ENCODE measurements at regions of chr15 and their contacts with region 1.

Region 1: DNA sequence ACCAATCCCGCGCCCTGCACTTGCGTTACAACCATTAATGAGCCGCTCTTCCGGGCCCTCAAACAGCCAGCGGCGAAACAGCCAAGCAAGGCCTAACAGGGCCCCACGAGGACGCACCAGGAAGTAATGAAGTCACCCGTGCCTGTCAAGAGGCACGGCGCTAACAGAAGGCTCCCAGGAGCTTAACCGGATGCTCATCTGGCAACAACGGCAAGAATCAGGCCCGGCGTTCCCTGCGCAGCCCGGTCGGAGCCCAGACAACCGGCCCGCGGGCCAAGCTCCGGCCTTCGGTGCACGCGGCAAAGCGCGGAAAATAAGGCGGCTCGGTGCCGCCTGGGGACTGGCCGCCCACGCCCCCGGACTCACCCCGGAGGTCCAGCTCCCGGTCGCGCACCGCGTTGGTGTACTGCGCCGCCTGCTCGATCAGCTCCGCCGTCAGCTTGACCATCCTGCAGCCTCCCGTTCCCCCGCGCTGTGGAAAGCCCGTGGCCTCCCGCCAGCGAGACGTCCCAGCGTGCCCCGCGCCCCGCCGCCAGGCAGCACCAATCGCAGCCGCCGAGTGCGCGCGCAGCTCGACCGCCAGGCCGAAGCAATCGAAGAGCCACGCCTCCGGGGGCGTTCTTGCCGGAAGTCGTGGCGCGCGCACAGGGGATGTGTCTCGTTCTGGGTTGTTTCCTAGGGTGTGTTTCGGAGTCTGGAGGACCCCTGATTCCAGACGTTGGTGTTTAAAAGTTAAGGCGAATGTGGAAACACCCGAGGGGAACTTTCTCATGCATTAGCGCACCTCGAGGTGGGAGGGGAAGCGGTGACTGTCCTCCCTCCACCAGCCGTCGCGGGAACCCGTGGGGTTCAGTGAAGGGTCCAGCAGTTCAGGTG is at the start of gene SNRPA1:
- DNase-seq: peak; percentile 92 to 99 (median 96)
- ATAC-seq: peak; percentile 94
- H3K4me3 ChIP-seq: peak within 1 kb of the TSS; percentile 76
- H3K4me3 Mint-ChIP-seq: peak within 1 kb of the TSS; percentile 90 to 99 (median 97)
- H3K27ac ChIP-seq: peak within 1 kb of the TSS; percentile 95
- H3K27ac Mint-ChIP-seq: peak within 1 kb of the TSS; percentile 89 to 99 (median 96)
- H3K4me1 ChIP-seq: peaks cover 14 to 27% of the 10 kb centered on the region in 2 donors
- H3K4me1 Mint-ChIP-seq: peaks cover 27 to 58% (median 47%) of the 10 kb centered on the region in 7 donors
- H3K27me3 ChIP-seq: no peaks in the 10 kb centered on the region
- H3K27me3 Mint-ChIP-seq: no peaks in the 10 kb centered on the region
- total RNA-seq, gene SNRPA1: 80.1 to 212 (median 110) TPM

Region 2: GRCh38 chr15:100596792-100597191 is 698.2 kb before region 1 on chr15:
- CTCF ChIA-PET with region 1: no interaction called
- POLR2A ChIA-PET with region 1: interaction called, 3 read pairs
- intact Hi-C with region 1: loop called in 1 of 2 experiments (anchors 2 kb)
- DNase-seq: peak; percentile 52 to 97 (median 94)
- ATAC-seq: peak; percentile 93
- H3K4me3 ChIP-seq: peak overlapping the region; percentile 49
- H3K4me3 Mint-ChIP-seq: peak overlapping the region in 7 of 10 donors; percentile 69 to 87 (median 86)
- H3K27ac ChIP-seq: peak overlapping the region; percentile 91
- H3K27ac Mint-ChIP-seq: peak overlapping the region in 4 of 9 donors; percentile 96 to 98 (median 96)
- H3K4me1 ChIP-seq: peaks cover 52 to 82% of the 10 kb centered on the region in 2 donors
- H3K4me1 Mint-ChIP-seq: peaks cover 0 to 78% (median 51%) of the 10 kb centered on the region in 7 donors
- H3K27me3 ChIP-seq: no peaks in the 10 kb centered on the region
- H3K27me3 Mint-ChIP-seq: peaks cover 0 to 2% (median 0%) of the 10 kb centered on the region in 5 donors

Region 3: DNA sequence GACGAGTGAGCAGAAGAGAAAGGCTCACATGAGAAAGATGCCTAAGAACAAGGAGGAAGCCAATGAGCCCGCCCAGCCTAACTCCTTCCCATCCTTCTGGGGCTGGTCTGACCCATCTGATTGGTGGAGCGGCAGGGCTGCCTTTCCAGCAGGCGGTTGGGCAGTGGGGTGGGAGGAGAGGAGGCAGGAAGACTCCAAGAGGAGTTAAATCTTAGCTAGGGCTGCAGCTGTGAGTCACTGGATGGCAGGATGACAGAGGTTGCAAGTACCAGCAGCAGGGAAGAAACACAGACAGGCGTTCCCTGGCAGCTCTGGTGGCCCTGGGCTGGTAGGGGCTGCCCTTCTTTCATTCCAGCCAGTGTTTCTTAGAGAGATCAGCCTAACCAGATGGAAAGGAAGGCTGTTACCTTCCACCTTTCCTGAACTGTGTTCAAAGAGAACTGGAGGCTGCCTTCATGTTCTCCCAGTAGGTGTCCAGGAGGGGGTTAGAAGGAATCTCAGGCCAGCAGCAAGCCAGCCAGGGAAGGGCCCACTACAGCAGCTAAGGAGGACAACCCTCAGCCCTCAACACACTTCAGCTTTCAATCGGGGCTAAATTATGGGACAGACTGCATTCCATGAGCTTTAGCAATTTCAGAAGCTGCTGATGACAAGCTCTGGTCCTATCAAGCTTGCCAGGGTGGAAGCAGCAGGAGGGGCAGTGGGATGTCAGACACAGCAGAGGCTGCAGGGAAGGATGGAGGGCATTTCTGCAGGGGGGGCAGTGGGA is 93.4 kb before region 1 on chr15:
- CTCF ChIA-PET with region 1: no interaction called
- POLR2A ChIA-PET with region 1: no interaction called
- intact Hi-C with region 1: no loop called
- DNase-seq: peak in 1 of 9 donors; percentile 45
- ATAC-seq: peak; percentile 68
- H3K4me3 ChIP-seq: no peak overlapping the region
- H3K4me3 Mint-ChIP-seq: peak overlapping the region in 3 of 10 donors; percentile 34 to 73 (median 36)
- H3K27ac ChIP-seq: no peak overlapping the region
- H3K27ac Mint-ChIP-seq: peak overlapping the region in 4 of 9 donors; percentile 65 to 81 (median 69)
- H3K4me1 ChIP-seq: peaks cover 16 to 18% of the 10 kb centered on the region in 2 donors
- H3K4me1 Mint-ChIP-seq: peaks cover 46 to 87% (median 80%) of the 10 kb centered on the region in 7 donors
- H3K27me3 ChIP-seq: no peaks in the 10 kb centered on the region
- H3K27me3 Mint-ChIP-seq: no peaks in the 10 kb centered on the region

Region 4: GRCh38 chr15:101232677-101233076 is 62.3 kb before region 1 on chr15:
- CTCF ChIA-PET with region 1: no interaction called
- POLR2A ChIA-PET with region 1: no interaction called
- intact Hi-C with region 1: no loop called
- DNase-seq: no peak
- ATAC-seq: no peak
- H3K4me3 ChIP-seq: no peak overlapping the region
- H3K4me3 Mint-ChIP-seq: no peak overlapping the region
- H3K27ac ChIP-seq: no peak overlapping the region
- H3K27ac Mint-ChIP-seq: no peak overlapping the region
- H3K4me1 ChIP-seq: no peaks in the 10 kb centered on the region
- H3K4me1 Mint-ChIP-seq: peaks cover 13 to 69% (median 40%) of the 10 kb centered on the region in 7 donors
- H3K27me3 ChIP-seq: no peaks in the 10 kb centered on the region
- H3K27me3 Mint-ChIP-seq: no peaks in the 10 kb centered on the region

Region 5: GRCh38 chr15:101251830-101252820 is 42.8 kb before region 1 on chr15 and contains the start of gene CHSY1:
- CTCF ChIA-PET with region 1: interaction called, 4 read pairs
- POLR2A ChIA-PET with region 1: interaction called, 9 read pairs
- intact Hi-C with region 1: loop called in 1 of 2 experiments (anchors 1 kb)
- DNase-seq: peak; percentile 71 to 91 (median 81)
- ATAC-seq: peak; percentile 91
- H3K4me3 ChIP-seq: peak within 1 kb of the TSS; percentile 64
- H3K4me3 Mint-ChIP-seq: peak within 1 kb of the TSS; percentile 84 to 97 (median 94)
- H3K27ac ChIP-seq: peak within 1 kb of the TSS; percentile 62
- H3K27ac Mint-ChIP-seq: peak within 1 kb of the TSS; percentile 77 to 96 (median 84)
- H3K4me1 ChIP-seq: peaks cover 17 to 21% of the 10 kb centered on the region in 2 donors
- H3K4me1 Mint-ChIP-seq: peaks cover 17 to 63% (median 37%) of the 10 kb centered on the region in 7 donors
- H3K27me3 ChIP-seq: no peaks in the 10 kb centered on the region
- H3K27me3 Mint-ChIP-seq: no peaks in the 10 kb centered on the region
- total RNA-seq, gene CHSY1: 8.9 to 47.0 (median 10.8) TPM

Region 6: GRCh38 chr15:101320501-101321052 is 25.6 kb after region 1 on chr15:
- CTCF ChIA-PET with region 1: interaction called, 3 read pairs
- POLR2A ChIA-PET with region 1: interaction called, 24 read pairs
- intact Hi-C with region 1: loop called (anchors 1 kb)
- DNase-seq: peak; percentile 32 to 75 (median 61)
- ATAC-seq: peak; percentile 96
- H3K4me3 ChIP-seq: peak overlapping the region; percentile 68
- H3K4me3 Mint-ChIP-seq: peak overlapping the region; percentile 68 to 91 (median 86)
- H3K27ac ChIP-seq: peak overlapping the region; percentile 55
- H3K27ac Mint-ChIP-seq: peak overlapping the region; percentile 88 to 97 (median 94)
- H3K4me1 ChIP-seq: peaks cover 5 to 8% of the 10 kb centered on the region in 2 donors
- H3K4me1 Mint-ChIP-seq: peaks cover 13 to 14% (median 14%) of the 10 kb centered on the region in 7 donors
- H3K27me3 ChIP-seq: no peaks in the 10 kb centered on the region
- H3K27me3 Mint-ChIP-seq: peaks cover 2 to 20% (median 9%) of the 10 kb centered on the region in 5 donors

Region 7: DNA sequence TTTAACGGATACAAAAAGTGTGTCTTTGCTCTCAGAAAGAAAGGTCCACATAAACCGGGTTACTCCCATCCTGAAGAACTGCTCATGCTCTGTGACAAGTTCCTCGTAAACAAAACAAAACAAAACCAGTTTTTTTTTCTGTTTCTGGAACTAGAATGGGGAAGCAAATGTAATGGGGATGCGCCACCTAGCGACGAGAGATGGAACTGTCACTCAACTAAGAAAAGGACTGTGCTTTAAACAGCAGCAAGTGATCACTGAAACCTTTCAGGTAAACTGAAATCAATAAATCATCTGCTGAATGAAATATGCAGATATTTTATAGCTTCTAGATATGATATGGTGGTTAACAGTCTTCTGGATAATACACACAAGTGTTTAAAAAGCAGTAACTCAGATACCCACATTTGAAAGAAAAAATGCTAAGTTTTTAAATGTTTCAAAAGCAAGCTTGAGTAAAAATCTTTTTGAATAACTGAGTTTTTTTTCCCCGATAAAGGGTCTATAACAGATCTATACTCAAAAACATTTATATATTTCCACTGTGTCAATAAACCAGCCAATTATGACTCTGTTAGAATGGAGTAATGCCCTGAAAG is 346.3 kb after region 1 on chr15:
- CTCF ChIA-PET with region 1: interaction called, 16 read pairs
- POLR2A ChIA-PET with region 1: interaction called, 11 read pairs
- intact Hi-C with region 1: loop called (anchors 1 kb)
- DNase-seq: peak; percentile 40 to 75 (median 68)
- ATAC-seq: peak; percentile 84
- H3K4me3 ChIP-seq: no peak overlapping the region
- H3K4me3 Mint-ChIP-seq: peak overlapping the region in 3 of 10 donors; percentile 16 to 57 (median 27)
- H3K27ac ChIP-seq: peak overlapping the region; percentile 52
- H3K27ac Mint-ChIP-seq: peak overlapping the region in 8 of 9 donors; percentile 78 to 93 (median 85)
- H3K4me1 ChIP-seq: peaks cover 10 to 19% of the 10 kb centered on the region in 2 donors
- H3K4me1 Mint-ChIP-seq: peaks cover 18 to 43% (median 27%) of the 10 kb centered on the region in 7 donors
- H3K27me3 ChIP-seq: no peaks in the 10 kb centered on the region
- H3K27me3 Mint-ChIP-seq: no peaks in the 10 kb centered on the region

Region 8: DNA sequence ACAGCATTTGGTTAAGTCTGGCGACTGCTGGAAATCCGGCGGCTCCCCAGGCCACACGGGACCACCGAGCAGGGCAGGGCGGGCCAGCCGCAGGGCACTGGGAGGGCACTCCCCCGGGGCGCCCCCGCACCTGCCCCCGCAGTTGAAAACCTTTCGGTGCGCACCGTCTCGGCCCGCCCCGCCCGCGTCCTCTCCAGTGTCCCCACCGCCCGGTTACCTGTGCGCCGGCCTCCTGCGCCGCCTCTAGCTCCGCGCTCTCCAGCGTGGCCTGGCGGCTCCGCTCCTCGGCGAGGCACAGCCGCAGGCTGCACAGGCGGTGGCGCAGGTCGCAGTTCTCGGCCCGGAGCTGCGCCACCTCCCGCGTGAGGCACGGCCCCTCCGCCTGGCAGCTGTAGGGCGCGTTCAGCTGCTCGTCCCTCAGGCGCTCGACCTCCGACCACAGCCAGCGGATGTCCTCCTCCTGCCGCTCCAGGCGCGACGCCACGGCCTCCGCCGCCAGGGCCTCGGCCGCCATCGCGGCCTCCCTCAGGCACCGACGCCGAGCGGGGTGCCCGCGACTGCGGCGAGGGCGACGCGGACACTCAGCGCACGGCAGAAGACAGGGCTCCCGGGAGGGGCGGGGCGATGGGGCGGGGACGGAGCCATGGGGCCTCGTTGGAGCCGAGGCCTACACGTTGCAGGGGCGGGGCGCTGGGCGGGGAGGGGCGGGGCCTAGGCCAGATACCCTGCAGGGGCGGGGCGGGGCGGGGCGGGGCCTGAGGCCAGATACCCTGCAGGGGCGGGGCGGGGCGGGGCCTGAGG is 429.1 kb after region 1 on chr15 and contains the start of gene TARS3:
- CTCF ChIA-PET with region 1: no interaction called
- POLR2A ChIA-PET with region 1: interaction called, 12 read pairs
- intact Hi-C with region 1: loop called (anchors 1 kb)
- DNase-seq: peak; percentile 84 to 97 (median 90)
- ATAC-seq: peak; percentile 97
- H3K4me3 ChIP-seq: peak within 1 kb of the TSS; percentile 77
- H3K4me3 Mint-ChIP-seq: peak within 1 kb of the TSS; percentile 79 to 97 (median 91)
- H3K27ac ChIP-seq: peak within 1 kb of the TSS; percentile 88
- H3K27ac Mint-ChIP-seq: peak within 1 kb of the TSS; percentile 83 to 97 (median 91)
- H3K4me1 ChIP-seq: peaks cover 5 to 11% of the 10 kb centered on the region in 2 donors
- H3K4me1 Mint-ChIP-seq: peaks cover 16 to 42% (median 35%) of the 10 kb centered on the region in 7 donors
- H3K27me3 ChIP-seq: no peaks in the 10 kb centered on the region
- H3K27me3 Mint-ChIP-seq: peaks cover 0 to 3% (median 0%) of the 10 kb centered on the region in 5 donors
- total RNA-seq, gene TARS3: 20.5 to 42.6 (median 23.6) TPM

Measured in naive thymus-derived CD4-positive, alpha-beta T cell (primary cell).